ENCODE measurements at regions of chr14 and their contacts with region 1.

Region 1: GRCh38 chr14:64671591-64671990 is 32.6 kb upstream of the PLEKHG3 start:
- DNase-seq: no peak
- H3K4me3 ChIP-seq: no peak overlapping the region
- H3K27ac ChIP-seq: peak overlapping the region in 1 of 2 donors; percentile 68
- H3K4me1 ChIP-seq: no peaks in the 10 kb centered on the region
- H3K27me3 ChIP-seq: no peaks in the 10 kb centered on the region
- CTCF ChIP-seq: peak; percentile 71 to 92 (median 82)
- POLR2A ChIP-seq: no peak

Region 2: DNA sequence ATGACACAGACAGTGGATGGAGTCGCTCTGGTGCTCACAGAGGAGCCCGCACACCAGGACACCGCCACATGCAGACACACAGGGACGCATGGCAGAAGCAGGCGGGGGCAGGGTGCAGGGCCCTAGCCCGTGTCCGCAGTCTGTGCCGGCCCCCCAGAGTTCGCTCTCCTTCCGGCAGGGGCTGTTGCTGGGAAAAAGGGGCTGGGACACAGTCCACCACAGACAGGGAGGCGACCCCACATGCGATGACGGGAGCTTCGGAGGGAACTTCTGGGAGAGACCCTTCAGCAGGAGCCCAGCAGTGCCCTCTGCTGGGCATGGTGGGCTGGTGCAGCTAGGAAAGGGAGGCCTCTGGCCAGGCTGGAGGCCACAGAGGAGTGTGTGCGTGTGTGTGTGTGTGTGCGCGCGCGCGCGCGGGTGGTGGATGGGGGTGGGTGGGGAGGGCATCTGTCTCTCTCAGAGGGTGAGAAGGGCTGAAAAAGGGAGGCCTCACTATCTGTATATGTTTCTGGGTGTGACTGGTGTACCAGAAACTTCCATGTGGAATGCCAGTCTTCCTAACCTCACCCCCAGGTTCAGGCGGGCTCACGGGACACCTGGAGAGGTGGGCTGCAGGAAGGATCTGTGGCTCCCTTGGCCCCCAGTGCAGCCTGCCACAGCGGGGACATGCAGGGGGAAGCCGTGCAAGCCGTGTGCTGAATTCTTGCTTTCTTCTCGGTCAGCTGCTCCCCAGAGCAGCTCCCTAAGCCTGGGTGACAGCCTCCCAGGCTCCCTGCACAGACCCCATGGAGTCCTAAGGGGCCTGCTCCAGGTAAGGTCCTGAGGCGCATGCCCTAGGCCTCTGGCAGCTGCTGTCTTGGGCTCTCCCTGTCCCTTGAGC is 93.3 kb after region 1 on chr14:
- intact Hi-C with region 1: loop called (anchors 5 kb)
- DNase-seq: peak; percentile 77 to 83
- H3K4me3 ChIP-seq: no peak overlapping the region
- H3K27ac ChIP-seq: peak overlapping the region; percentile 83 to 87
- H3K4me1 ChIP-seq: peaks cover 13 to 21% of the 10 kb centered on the region in 2 donors
- H3K27me3 ChIP-seq: no peaks in the 10 kb centered on the region
- CTCF ChIP-seq: peak; percentile 93 to 97 (median 94)
- POLR2A ChIP-seq: no peak